Activated CD4-positive, alpha-beta memory T cell treated with anti-CD3 and anti-CD28 coated beads, Interleukin-2, amount 10 ng/mL, durations not matched to agents 7 days and 5 days (primary cell): ENCODE measurements at regions of chr5 and their contacts with region 1.

Region 1: GRCh38 chr5:129852747-129853352 is 51.4 kb upstream of the CHSY3 start:
- DNase-seq: peak; percentile 69
- H3K4me3 Mint-ChIP-seq: no peak overlapping the region
- H3K27ac Mint-ChIP-seq: no peak overlapping the region
- H3K4me1 Mint-ChIP-seq: no peaks in the 10 kb centered on the region
- H3K27me3 Mint-ChIP-seq: no peaks in the 10 kb centered on the region

Region 2: GRCh38 chr5:129771058-129771838 is 81.6 kb before region 1 on chr5:
- CTCF ChIA-PET with region 1: interaction called, 60 read pairs
- POLR2A ChIA-PET with region 1: no interaction called
- DNase-seq: peak; percentile 52
- H3K4me3 Mint-ChIP-seq: no peak overlapping the region
- H3K27ac Mint-ChIP-seq: no peak overlapping the region
- H3K4me1 Mint-ChIP-seq: peaks cover 2% of the 10 kb centered on the region
- H3K27me3 Mint-ChIP-seq: no peaks in the 10 kb centered on the region

Region 3: GRCh38 chr5:129930221-129930620 is 77.4 kb after region 1 on chr5:
- CTCF ChIA-PET with region 1: no interaction called
- POLR2A ChIA-PET with region 1: no interaction called
- DNase-seq: no peak
- H3K4me3 Mint-ChIP-seq: no peak overlapping the region
- H3K27ac Mint-ChIP-seq: no peak overlapping the region
- H3K4me1 Mint-ChIP-seq: no peaks in the 10 kb centered on the region
- H3K27me3 Mint-ChIP-seq: peaks cover 2% of the 10 kb centered on the region